Endothelial cell of umbilical vein (primary cell): ENCODE measurements at regions of chr2 and their contacts with region 1.

Region 1: GRCh38 chr2:48343571-48344440 is 186.1 kb upstream of the STON1 start:
- DNase-seq: peak; percentile 91
- H3K4me3 ChIP-seq: peak overlapping the region; percentile 2 to 87 (median 69)
- H3K27ac ChIP-seq: peak overlapping the region; percentile 86
- H3K4me1 ChIP-seq: peaks cover 41% of the 10 kb centered on the region
- H3K27me3 ChIP-seq: no peaks in the 10 kb centered on the region
- CTCF ChIP-seq: no peak
- POLR2A ChIP-seq: no peak

Region 2: DNA sequence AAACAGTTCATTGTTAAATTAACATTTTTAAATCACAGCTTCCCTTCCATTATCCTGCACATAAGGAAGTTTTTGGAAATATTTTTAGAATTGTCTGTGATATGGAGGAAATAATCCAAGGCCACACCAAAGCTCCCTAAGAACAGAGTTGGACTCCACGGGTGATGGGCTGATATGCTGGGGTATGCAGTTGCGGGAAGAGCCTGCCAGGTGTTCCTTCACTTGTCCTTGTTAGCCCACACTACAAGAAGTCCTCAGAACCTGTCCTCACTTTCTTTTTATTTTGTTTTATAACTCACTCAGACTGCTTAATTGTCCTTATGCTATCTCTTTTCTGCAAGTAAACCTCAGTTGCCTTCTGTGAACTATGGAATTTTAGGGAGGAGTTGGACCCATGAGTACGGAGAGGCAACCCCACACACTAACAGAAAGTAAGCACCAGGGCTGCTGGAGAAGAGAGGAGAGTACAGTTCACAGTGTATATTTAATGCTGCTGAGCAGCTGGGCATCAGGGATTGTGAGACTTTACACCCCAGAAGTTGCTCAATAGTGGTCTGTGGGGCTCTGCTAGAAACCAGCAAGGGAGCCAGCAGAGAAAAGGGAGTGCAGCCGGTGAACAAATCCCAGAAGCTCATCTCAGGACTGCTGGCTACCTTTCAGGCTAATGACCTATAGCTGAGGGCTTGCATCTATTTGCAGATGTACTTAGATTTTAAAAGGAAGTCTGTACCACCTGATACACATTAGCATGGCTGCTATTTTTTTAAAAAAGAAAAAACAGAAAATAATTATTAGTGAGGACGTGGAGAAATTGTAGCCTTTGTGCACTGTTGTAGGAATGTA is 94.0 kb before region 1 on chr2:
- CTCF ChIA-PET with region 1: no interaction called
- POLR2A ChIA-PET with region 1: no interaction called
- dilution Hi-C with region 1: no loop called
- intact Hi-C with region 1: loop called (anchors 1 kb)
- DNase-seq: peak; percentile 22
- H3K4me3 ChIP-seq: no peak overlapping the region
- H3K27ac ChIP-seq: peak overlapping the region; percentile 48
- H3K4me1 ChIP-seq: peaks cover 20% of the 10 kb centered on the region
- H3K27me3 ChIP-seq: no peaks in the 10 kb centered on the region
- CTCF ChIP-seq: no peak
- POLR2A ChIP-seq: no peak

Region 3: DNA sequence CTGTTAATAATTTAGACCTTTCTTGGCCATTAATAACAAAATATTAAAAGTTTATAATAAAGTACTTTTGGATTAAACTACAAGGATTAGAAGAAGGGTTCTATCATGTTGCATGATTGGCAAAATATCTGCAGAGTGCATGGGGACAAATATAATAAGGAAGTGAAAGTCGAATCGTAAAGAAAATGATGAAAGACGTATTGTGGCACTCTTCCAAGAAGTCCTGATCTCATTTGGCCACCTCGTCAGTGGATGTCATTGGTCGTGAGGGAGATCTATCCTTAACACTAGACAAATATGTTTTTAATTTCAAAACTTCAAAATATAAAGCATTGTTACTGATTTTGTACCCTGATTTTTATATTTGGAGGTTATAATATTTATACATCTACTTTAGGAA is 11.5 kb before region 1 on chr2:
- CTCF ChIA-PET with region 1: interaction called, 20 read pairs
- POLR2A ChIA-PET with region 1: interaction called, 4 read pairs
- dilution Hi-C with region 1: no loop called
- intact Hi-C with region 1: no loop called
- DNase-seq: peak; percentile 45
- H3K4me3 ChIP-seq: no peak overlapping the region
- H3K27ac ChIP-seq: no peak overlapping the region
- H3K4me1 ChIP-seq: peaks cover 7% of the 10 kb centered on the region
- H3K27me3 ChIP-seq: no peaks in the 10 kb centered on the region
- CTCF ChIP-seq: no peak
- POLR2A ChIP-seq: no peak

Region 4: GRCh38 chr2:48356701-48357325 is 13.0 kb after region 1 on chr2:
- CTCF ChIA-PET with region 1: interaction called, 4 read pairs
- POLR2A ChIA-PET with region 1: no interaction called
- dilution Hi-C with region 1: no loop called
- intact Hi-C with region 1: loop called (anchors 1 kb)
- DNase-seq: peak; percentile 84
- H3K4me3 ChIP-seq: peak overlapping the region in 1 of 3 experiments; percentile 48
- H3K27ac ChIP-seq: peak overlapping the region; percentile 63
- H3K4me1 ChIP-seq: peaks cover 39% of the 10 kb centered on the region
- H3K27me3 ChIP-seq: no peaks in the 10 kb centered on the region
- CTCF ChIP-seq: no peak
- POLR2A ChIP-seq: no peak

Region 5: GRCh38 chr2:48383046-48383445 is 39.2 kb after region 1 on chr2:
- CTCF ChIA-PET with region 1: interaction called, 4 read pairs
- POLR2A ChIA-PET with region 1: interaction called, 14 read pairs
- dilution Hi-C with region 1: no loop called
- intact Hi-C with region 1: no loop called
- DNase-seq: no peak
- H3K4me3 ChIP-seq: no peak overlapping the region
- H3K27ac ChIP-seq: no peak overlapping the region
- H3K4me1 ChIP-seq: peaks cover 10% of the 10 kb centered on the region
- H3K27me3 ChIP-seq: no peaks in the 10 kb centered on the region
- CTCF ChIP-seq: no peak
- POLR2A ChIP-seq: no peak